AG04450 (cell line): ENCODE measurements at regions of chr1 and their contacts with region 1.

Region 1: GRCh38 chr1:234125283-234125682 is 220.8 kb downstream of the SLC35F3 start:
- DNase-seq: no peak
- H3K4me3 ChIP-seq: no peak overlapping the region
- H3K27ac ChIP-seq: no peak overlapping the region
- H3K27me3 ChIP-seq: no peaks in the 10 kb centered on the region
- CTCF ChIP-seq: no peak

Region 2: GRCh38 chr1:233843525-233844204 is 281.6 kb before region 1 on chr1:
- CTCF ChIA-PET with region 1: no interaction called
- POLR2A ChIA-PET with region 1: no interaction called
- DNase-seq: no peak
- H3K4me3 ChIP-seq: no peak overlapping the region
- H3K27ac ChIP-seq: no peak overlapping the region
- H3K27me3 ChIP-seq: no peaks in the 10 kb centered on the region
- CTCF ChIP-seq: no peak

Region 3: GRCh38 chr1:234114648-234115307 is 10.5 kb before region 1 on chr1:
- CTCF ChIA-PET with region 1: interaction called, 40 read pairs
- POLR2A ChIA-PET with region 1: no interaction called
- DNase-seq: peak; percentile 24
- H3K4me3 ChIP-seq: 0 out of 2 replicates have a peak overlapping the region, but pooled peaks have one; percentile 10
- H3K27ac ChIP-seq: no peak overlapping the region
- H3K27me3 ChIP-seq: peaks cover 4% of the 10 kb centered on the region
- CTCF ChIP-seq: peak; percentile 72